Posterior cingulate gyrus (tissue), 11 donors: ENCODE measurements at regions of chr19 and their contacts with region 1.

Region 1: DNA sequence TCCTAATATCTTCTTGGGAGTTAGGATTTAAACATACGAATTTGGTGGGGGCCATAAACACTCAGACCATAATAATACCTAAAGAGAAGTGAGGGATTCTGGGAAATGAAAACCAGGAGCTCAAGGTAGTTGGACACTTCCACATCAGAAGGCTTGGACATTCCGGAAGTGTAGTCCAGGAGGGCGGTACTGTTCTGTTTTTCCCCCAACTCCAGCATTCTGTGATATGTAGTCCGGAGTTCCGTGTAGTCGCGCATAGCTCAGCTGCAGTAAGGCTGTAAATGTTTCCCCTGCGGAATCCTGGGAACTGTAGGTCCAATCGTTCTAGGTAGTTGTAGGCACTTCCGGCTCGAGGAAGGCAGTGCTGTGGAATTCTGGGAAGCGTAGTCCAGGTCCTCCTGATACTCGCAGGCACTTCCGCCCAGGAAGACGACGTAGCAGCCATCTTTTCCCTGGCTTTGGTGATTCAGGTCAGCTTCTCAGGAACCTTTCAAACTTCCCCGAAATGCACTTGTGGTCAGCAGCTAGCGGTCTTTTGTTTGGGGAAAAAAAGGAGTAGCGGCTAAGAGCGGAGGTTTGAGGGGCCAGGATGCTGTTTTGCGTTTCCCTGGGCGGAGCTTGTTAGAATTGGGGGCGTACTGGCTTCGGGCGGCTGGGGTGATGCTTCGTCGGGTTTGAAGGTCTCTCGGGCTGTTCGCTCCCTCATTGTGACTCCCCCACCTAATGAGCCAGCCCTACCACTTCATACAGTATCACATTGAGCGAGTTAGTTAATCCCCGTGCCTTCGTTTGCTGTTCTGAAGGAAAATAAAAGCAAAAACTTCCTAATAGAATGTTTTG is at the start of gene ZNF226:
- DNase-seq: peak; percentile 88 to 98 (median 92)

Region 2: DNA sequence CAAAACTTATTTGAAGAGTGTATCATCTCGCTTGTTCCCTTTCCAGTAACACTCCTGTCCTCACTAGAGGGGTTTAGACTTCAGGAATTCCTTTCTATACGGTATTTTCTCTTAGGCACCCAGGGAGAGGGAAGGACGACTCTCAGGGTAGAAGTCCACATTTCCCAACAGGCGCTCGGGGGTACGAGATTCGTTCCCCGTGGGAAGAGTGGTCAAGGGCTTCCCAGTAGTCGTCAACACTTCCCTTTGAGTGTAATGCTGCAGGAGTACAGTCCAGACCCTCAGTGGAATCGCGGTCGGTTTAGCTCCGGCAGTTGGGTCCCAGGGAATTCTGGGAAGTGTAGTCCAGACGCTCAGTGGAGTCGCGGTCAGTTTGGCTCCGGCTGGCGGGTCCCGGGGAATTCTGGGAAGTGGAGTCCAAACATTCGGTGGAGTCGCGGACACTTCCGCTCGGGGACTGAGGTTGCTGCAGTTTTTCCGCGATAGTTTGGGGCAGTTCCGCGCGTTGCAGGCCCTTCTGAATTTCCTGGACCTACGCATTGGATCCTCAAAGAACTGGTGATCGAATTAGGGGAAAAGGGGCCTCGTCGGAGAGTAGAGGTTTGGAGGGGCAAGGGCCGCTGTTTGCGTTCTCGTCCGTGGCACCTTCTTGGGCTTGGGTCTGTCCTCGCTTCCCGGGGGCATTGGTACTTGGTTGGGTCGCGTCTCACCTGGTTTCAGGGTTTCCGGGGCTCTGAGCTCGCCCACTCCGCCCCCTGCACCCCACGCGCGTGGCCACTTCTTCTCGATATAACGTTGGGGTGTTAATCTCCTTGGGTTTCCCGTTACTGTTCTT is 70.7 kb before region 1 on chr19 and contains the start of gene ZNF224:
- intact Hi-C with region 1: loop called (anchors 2 kb)
- DNase-seq: peak; percentile 91 to 99 (median 94)

Region 3: GRCh38 chr19:44141191-44142058 is 23.5 kb before region 1 on chr19 and contains the start of gene ZNF234:
- intact Hi-C with region 1: loop called (anchors 1 kb)
- DNase-seq: peak; percentile 78 to 97 (median 90)

Region 4: GRCh38 chr19:44207126-44207803 is 42.4 kb after region 1 on chr19:
- intact Hi-C with region 1: loop called (anchors 2 kb)
- DNase-seq: peak; percentile 78 to 98 (median 87)

Region 5: GRCh38 chr19:44254496-44254895 is 89.6 kb after region 1 on chr19:
- intact Hi-C with region 1: no loop called
- DNase-seq: no peak